ENCODE measurements at regions of chr10 and their contacts with region 1.

Region 1: GRCh38 chr10:67849331-67850011 is 11.5 kb upstream of the DNAJC12 start:
- DNase-seq: peak; percentile 92
- H3K4me3 ChIP-seq: peak overlapping the region; percentile 92
- H3K27ac ChIP-seq: peak overlapping the region; percentile 52
- H3K4me1 ChIP-seq: peaks cover 4% of the 10 kb centered on the region
- CTCF ChIP-seq: no peak

Region 2: DNA sequence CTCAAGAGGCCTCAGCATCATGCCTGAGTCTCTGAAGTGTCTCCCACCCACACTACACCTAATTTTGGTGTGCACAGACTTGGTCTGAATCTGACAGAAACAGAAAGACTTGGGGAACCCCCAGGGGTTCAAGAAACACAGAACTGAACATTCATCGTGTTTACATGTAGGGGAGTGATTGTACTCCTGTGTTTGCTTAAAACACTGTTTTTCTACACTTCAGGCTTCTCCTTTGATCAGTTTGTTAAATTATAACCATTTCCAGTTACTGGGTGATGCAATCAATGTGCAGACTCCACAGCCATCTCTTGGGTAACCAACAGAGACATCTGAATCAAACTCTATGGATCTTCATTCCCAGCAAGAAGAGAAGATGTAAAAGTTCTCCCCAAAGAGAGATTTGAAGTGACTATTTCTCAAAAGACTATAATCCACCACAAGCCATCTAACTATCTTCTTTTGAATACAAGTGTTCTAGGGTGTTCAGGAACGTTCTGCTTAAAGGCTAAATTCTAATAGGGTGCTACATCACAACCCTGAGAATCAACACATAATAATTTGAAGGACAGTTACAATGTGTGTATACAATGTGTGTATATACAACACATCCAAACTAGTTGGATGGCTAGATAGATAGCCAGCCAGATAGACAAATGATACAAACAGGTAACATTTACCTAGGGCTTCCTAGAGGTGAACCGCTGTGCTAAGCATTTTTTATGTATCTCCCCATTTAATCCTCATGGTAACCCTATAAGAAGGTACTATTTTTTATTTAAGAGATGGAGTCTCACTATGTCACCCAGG is 45.7 kb before region 1 on chr10:
- CTCF ChIA-PET with region 1: no interaction called
- POLR2A ChIA-PET with region 1: no interaction called
- intact Hi-C with region 1: no loop called
- DNase-seq: no peak
- H3K4me3 ChIP-seq: no peak overlapping the region
- H3K27ac ChIP-seq: no peak overlapping the region
- H3K4me1 ChIP-seq: no peaks in the 10 kb centered on the region
- CTCF ChIP-seq: no peak

Region 3: DNA sequence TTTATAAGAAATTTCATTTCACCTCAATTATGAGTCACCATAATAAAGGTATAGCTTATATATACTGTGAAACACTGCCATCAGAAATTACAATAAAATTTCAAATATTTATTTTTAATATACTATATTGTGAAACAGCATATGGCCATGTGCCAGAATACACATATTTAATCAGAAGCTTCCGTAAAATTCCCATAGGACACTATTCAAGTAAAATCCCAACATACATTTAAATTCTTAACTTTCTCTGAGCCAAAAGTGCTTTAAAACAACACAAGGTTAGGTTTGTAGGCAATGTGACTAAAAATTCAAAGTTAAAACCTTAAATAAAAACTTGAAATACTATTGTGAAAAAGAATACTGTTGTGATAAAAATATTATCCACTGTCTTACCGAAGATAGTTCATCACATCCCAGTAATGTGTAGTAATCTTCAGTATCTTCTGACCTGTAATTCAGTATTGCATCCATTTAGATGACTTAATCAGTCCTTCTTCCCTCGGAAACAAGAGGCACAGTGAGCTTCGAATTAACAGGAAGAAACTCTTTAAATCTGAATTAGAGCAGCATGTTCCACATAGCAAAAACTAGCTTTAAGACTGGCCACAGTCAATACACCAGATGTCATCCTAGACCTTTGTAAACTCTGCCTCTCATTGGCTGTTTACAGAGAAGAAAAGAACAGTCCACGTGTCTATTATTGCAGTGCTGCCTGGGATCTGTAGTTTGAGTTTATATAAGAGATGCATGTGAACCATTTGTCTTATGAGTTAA is 11.7 kb before region 1 on chr10 and contains the start of gene DNAJC12:
- CTCF ChIA-PET with region 1: interaction called, 3 read pairs
- POLR2A ChIA-PET with region 1: interaction called, 21 read pairs
- intact Hi-C with region 1: no loop called
- DNase-seq: peak; percentile 79
- H3K4me3 ChIP-seq: peak within 1 kb of the TSS; percentile 66
- H3K27ac ChIP-seq: peak within 1 kb of the TSS; percentile 4
- H3K4me1 ChIP-seq: no peaks in the 10 kb centered on the region
- CTCF ChIP-seq: 0 out of 2 replicates have a peak, but pooled peaks have one; percentile 21
- total RNA-seq, gene DNAJC12: 12.8 and 13.0 TPM in 2 replicates

Region 4: GRCh38 chr10:68074775-68075549 is 225.5 kb after region 1 on chr10 and contains the start of gene HERC4:
- CTCF ChIA-PET with region 1: no interaction called
- POLR2A ChIA-PET with region 1: no interaction called
- intact Hi-C with region 1: loop called (anchors 10 kb)
- DNase-seq: peak; percentile 91
- H3K4me3 ChIP-seq: peak within 1 kb of the TSS; percentile 85
- H3K27ac ChIP-seq: peak within 1 kb of the TSS; percentile 83
- H3K4me1 ChIP-seq: peaks cover 15% of the 10 kb centered on the region
- CTCF ChIP-seq: no peak
- total RNA-seq, gene HERC4: 34.2 and 36.1 TPM in 2 replicates

Region 5: DNA sequence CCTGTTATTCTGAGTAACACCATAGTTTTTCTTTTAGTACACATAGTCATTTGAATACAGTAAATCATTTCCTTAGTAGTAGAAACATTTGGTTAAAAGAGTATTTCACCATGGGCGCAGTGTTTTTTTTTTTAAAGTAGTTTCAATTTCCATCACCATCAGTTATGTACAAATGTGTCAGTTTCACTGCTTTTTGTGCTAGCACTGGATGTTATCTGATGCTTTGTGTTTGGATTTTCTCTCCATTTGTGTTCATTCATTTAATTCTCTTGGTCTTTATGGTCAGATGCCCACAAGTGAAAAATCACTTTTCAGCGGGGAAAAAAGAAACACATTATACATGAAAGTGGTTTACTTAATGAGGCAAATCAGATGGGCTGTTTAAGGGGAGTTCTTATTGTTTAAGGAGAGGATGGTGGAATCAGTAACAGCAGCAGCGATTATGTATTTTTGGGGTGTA is 1412.9 kb after region 1 on chr10:
- CTCF ChIA-PET with region 1: no interaction called
- POLR2A ChIA-PET with region 1: no interaction called
- intact Hi-C with region 1: no loop called
- DNase-seq: no peak
- H3K4me3 ChIP-seq: no peak overlapping the region
- H3K27ac ChIP-seq: no peak overlapping the region
- H3K4me1 ChIP-seq: no peaks in the 10 kb centered on the region
- CTCF ChIP-seq: no peak

Measured in OCI-LY7 (cell line).